ENCODE measurements at regions of chr2 and their contacts with region 1.

Region 1: DNA sequence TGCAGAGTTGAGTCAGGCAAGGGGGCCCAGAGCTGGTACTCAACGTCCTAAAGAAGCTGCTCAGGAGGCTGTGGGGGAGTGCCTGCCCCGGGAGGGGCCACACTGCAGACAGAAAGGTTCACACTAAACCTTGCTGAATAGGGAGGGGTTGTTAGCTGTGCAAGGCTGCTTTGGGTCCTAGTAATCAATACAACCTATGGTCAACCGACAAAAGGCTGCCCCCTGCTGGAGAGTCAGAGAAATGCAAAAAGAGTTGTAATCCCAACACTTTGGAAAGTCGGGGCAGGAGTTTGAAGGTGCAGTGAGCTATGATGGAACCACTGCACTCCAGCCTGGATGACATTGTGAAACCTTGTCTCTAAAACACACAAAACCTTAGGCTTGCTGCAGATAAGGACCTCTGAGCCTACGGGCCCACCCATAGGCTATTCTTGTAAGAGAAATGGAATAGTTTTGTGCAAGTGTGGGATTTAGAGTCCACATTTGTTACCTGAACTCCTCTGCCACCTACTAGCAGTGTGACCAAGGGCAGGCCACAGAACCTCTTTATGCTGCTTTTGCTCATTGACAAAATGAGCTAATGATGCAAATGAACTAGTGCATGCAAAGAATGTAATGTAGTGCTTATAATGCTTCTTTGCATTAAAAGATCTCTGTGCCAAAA is 81.5 kb downstream of the PRPF40A start:
- DNase-seq: peak; percentile 82
- H3K4me3 Mint-ChIP-seq: no peak overlapping the region
- H3K27ac Mint-ChIP-seq: no peak overlapping the region
- H3K4me1 Mint-ChIP-seq: peaks cover 3% of the 10 kb centered on the region
- H3K27me3 Mint-ChIP-seq: no peaks in the 10 kb centered on the region

Region 2: GRCh38 chr2:152189622-152190495 is 445.9 kb before region 1 on chr2:
- CTCF ChIA-PET with region 1: interaction called, 12 read pairs
- intact Hi-C with region 1: loop called (anchors 1 kb)
- DNase-seq: peak; percentile 49
- H3K4me3 Mint-ChIP-seq: no peak overlapping the region
- H3K27ac Mint-ChIP-seq: no peak overlapping the region
- H3K4me1 Mint-ChIP-seq: peaks cover 5% of the 10 kb centered on the region
- H3K27me3 Mint-ChIP-seq: peaks cover 17% of the 10 kb centered on the region

Region 3: GRCh38 chr2:152335010-152335725 is 300.6 kb before region 1 on chr2 and contains the start of gene FMNL2:
- CTCF ChIA-PET with region 1: no interaction called
- intact Hi-C with region 1: loop called (anchors 5 kb)
- DNase-seq: peak; percentile 64
- H3K4me3 Mint-ChIP-seq: peak within 1 kb of the TSS; percentile 80
- H3K27ac Mint-ChIP-seq: no peak within 1 kb of the TSS
- H3K4me1 Mint-ChIP-seq: peaks cover 8% of the 10 kb centered on the region
- H3K27me3 Mint-ChIP-seq: peaks cover 41% of the 10 kb centered on the region
- total RNA-seq, gene FMNL2: 2.5 to 2.7 TPM

Region 4: GRCh38 chr2:152407204-152407721 is 228.5 kb before region 1 on chr2:
- CTCF ChIA-PET with region 1: no interaction called
- intact Hi-C with region 1: loop called (anchors 5 kb)
- DNase-seq: peak; percentile 77
- H3K4me3 Mint-ChIP-seq: peak overlapping the region; percentile 47
- H3K27ac Mint-ChIP-seq: peak overlapping the region; percentile 64
- H3K4me1 Mint-ChIP-seq: peaks cover 32% of the 10 kb centered on the region
- H3K27me3 Mint-ChIP-seq: peaks cover 28% of the 10 kb centered on the region

Region 5: DNA sequence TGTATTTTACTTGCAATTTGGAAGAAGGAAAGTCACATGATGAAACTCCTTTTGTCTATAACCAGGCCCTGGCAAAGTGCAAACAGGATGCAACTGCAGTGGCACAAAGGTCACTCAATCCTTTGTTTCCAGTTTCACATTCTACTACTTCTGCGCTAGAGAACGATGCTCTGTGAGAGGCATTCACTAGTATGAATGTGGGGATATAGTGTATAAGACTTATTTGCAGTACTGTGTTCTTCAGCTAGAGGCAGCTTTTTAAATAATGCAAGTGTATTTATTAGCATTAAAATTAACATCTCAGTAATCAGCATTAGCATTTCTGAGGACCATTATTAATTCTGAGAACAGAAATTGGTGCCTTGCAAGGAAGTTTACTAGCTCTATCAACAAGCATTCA is 12.6 kb after region 1 on chr2:
- CTCF ChIA-PET with region 1: interaction called, 10 read pairs
- intact Hi-C with region 1: no loop called
- DNase-seq: no peak
- H3K4me3 Mint-ChIP-seq: no peak overlapping the region
- H3K27ac Mint-ChIP-seq: no peak overlapping the region
- H3K4me1 Mint-ChIP-seq: no peaks in the 10 kb centered on the region
- H3K27me3 Mint-ChIP-seq: no peaks in the 10 kb centered on the region